ENCODE measurements at regions of chr7 and their contacts with region 1.

Region 1: GRCh38 chr7:94449148-94449725 is 54.5 kb downstream of the COL1A2 start:
- DNase-seq: no peak
- ATAC-seq: peak in 3 of 8 donors; percentile 52 to 59 (median 54)
- H3K4me3 ChIP-seq: no peak overlapping the region
- H3K27ac ChIP-seq: no peak overlapping the region
- H3K4me1 ChIP-seq: peaks cover 0 to 24% (median 8%) of the 10 kb centered on the region in 9 donors
- H3K27me3 ChIP-seq: peaks cover 0 to 6% (median 0%) of the 10 kb centered on the region in 7 donors
- CTCF ChIP-seq: peak; percentile 21 to 78 (median 63)

Region 2: GRCh38 chr7:93861325-93861949 is 587.8 kb before region 1 on chr7:
- intact Hi-C with region 1: no loop called
- DNase-seq: no peak
- ATAC-seq: no peak
- H3K4me3 ChIP-seq: no peak overlapping the region
- H3K27ac ChIP-seq: no peak overlapping the region
- H3K4me1 ChIP-seq: no peaks in the 10 kb centered on the region
- H3K27me3 ChIP-seq: no peaks in the 10 kb centered on the region
- CTCF ChIP-seq: peak in 4 of 9 donors; percentile 9 to 46 (median 18)

Region 3: GRCh38 chr7:94190599-94191061 is 258.6 kb before region 1 on chr7:
- intact Hi-C with region 1: no loop called
- DNase-seq: peak in 1 of 2 donors; percentile 9
- ATAC-seq: peak in 3 of 8 donors; percentile 41 to 66 (median 60)
- H3K4me3 ChIP-seq: no peak overlapping the region
- H3K27ac ChIP-seq: peak overlapping the region in 1 of 10 donors; percentile 2
- H3K4me1 ChIP-seq: peaks cover 0 to 10% (median 0%) of the 10 kb centered on the region in 9 donors
- H3K27me3 ChIP-seq: no peaks in the 10 kb centered on the region
- CTCF ChIP-seq: no peak

Region 4: GRCh38 chr7:94431619-94432280 is 17.5 kb before region 1 on chr7:
- intact Hi-C with region 1: no loop called
- DNase-seq: no peak
- ATAC-seq: no peak
- H3K4me3 ChIP-seq: no peak overlapping the region
- H3K27ac ChIP-seq: no peak overlapping the region
- H3K4me1 ChIP-seq: peaks cover 0 to 5% (median 0%) of the 10 kb centered on the region in 9 donors
- H3K27me3 ChIP-seq: peaks cover 0 to 9% (median 5%) of the 10 kb centered on the region in 7 donors
- CTCF ChIP-seq: no peak

Region 5: GRCh38 chr7:94509879-94510581 is 60.8 kb after region 1 on chr7:
- intact Hi-C with region 1: loop called in 3 of 10 experiments (anchors 5 to 10 kb)
- DNase-seq: peak; percentile 64
- ATAC-seq: peak; percentile 81 to 95 (median 88)
- H3K4me3 ChIP-seq: peak overlapping the region; percentile 73 to 96 (median 90)
- H3K27ac ChIP-seq: peak overlapping the region; percentile 92 to 98 (median 95)
- H3K4me1 ChIP-seq: peaks cover 0 to 43% (median 33%) of the 10 kb centered on the region in 9 donors
- H3K27me3 ChIP-seq: no peaks in the 10 kb centered on the region
- CTCF ChIP-seq: peak in 7 of 9 donors; percentile 6 to 60 (median 33)

Region 6: DNA sequence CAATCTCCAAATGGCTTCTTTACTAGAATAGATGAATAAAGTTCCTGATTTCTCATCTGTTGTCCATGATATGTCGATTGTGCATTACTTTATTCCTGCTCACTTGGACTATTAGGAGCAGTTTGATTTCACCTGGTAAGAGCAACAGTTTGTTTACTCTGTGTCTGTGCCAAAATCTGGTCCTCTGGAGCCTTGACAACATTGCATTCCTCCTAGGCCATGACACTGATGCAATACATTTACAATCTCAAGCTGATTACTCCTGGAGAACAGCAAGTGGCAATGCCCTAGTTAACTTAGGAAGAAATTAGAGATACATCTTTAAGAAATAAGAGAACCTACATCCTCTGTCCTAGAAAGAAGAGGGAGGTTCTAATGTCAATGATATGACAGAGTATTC is 134.9 kb after region 1 on chr7:
- intact Hi-C with region 1: no loop called
- DNase-seq: peak in 1 of 2 donors; percentile 14
- ATAC-seq: peak in 7 of 8 donors; percentile 28 to 85 (median 70)
- H3K4me3 ChIP-seq: no peak overlapping the region
- H3K27ac ChIP-seq: no peak overlapping the region
- H3K4me1 ChIP-seq: peaks cover 0 to 12% (median 0%) of the 10 kb centered on the region in 9 donors
- H3K27me3 ChIP-seq: no peaks in the 10 kb centered on the region
- CTCF ChIP-seq: no peak

Region 7: GRCh38 chr7:94657771-94658693 is 208.8 kb after region 1 on chr7:
- intact Hi-C with region 1: loop called in 9 of 10 experiments (anchors 2 to 10 kb)
- DNase-seq: peak; percentile 86 to 91
- ATAC-seq: peak; percentile 81 to 98 (median 92)
- H3K4me3 ChIP-seq: peak overlapping the region in 9 of 10 donors; percentile 60 to 89 (median 69)
- H3K27ac ChIP-seq: peak overlapping the region in 4 of 10 donors; percentile 4 to 56 (median 49)
- H3K4me1 ChIP-seq: peaks cover 0 to 30% (median 16%) of the 10 kb centered on the region in 9 donors
- H3K27me3 ChIP-seq: peaks cover 0 to 42% (median 18%) of the 10 kb centered on the region in 7 donors
- CTCF ChIP-seq: no peak

Region 8: DNA sequence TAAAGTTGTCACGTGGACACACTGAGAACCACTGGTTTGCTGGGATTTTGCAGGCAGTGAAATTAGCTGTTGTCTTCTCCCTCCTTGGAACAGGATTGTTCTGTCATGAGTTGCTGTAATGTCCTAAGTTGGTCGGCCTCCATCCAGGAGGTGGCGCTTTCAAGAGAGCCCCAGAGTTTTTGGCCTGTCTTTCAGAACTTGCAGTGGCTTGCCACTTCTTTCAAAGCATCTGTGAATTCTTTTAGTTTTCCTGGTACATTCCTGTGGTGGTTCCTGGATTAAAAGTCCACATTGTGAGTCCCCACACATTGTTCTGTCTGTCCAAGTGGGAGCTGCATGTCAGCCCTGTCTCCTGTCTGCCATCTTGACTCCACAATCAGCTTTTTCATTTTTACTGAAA is 741.3 kb after region 1 on chr7:
- intact Hi-C with region 1: loop called in 3 of 10 experiments (anchors 5 kb)
- DNase-seq: no peak
- ATAC-seq: no peak
- H3K4me3 ChIP-seq: no peak overlapping the region
- H3K27ac ChIP-seq: no peak overlapping the region
- H3K4me1 ChIP-seq: no peaks in the 10 kb centered on the region
- H3K27me3 ChIP-seq: no peaks in the 10 kb centered on the region
- CTCF ChIP-seq: peak in 1 of 9 donors; percentile 3

Region 9: DNA sequence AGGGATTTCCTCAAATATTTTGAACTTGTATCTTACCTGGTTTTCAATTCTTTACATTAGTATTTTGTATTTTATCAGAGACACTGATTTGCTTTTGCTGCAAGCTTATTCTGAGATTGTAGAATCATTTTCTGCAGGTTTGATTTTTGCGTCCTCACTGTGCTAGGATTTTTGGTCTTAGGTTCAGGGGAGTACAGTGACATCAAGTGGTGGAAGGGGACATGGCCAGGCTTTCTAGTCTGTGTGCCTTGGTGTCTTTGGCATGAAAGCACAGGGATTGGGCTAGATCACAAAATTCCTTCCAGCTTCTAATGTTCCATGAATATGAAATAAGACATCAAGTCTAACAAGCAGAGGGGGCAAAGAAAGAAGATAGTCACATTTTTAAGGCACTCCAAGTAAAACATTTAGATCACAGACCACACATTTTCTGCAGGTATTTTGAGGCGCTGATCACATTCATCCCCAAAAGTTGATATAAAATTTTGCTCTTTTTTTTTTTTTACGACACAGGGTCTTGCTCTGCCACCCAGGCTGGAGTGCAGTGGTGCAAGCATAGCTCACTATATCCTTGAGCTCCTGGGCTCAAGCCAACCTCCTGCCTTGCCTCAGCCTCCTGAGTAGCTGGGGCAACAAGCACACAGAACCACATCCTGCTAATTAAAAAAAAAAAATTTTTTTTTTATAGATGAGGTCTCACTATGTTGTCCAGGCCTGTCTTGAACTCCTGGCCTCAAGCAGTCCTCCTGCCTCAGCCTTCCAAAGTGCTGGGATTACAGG is 750.7 kb after region 1 on chr7:
- intact Hi-C with region 1: loop called in 2 of 10 experiments (anchors 5 kb)
- DNase-seq: peak in 1 of 2 donors; percentile 15
- ATAC-seq: peak in 6 of 8 donors; percentile 61 to 83 (median 78)
- H3K4me3 ChIP-seq: no peak overlapping the region
- H3K27ac ChIP-seq: no peak overlapping the region
- H3K4me1 ChIP-seq: peaks cover 0 to 4% (median 0%) of the 10 kb centered on the region in 9 donors
- H3K27me3 ChIP-seq: no peaks in the 10 kb centered on the region
- CTCF ChIP-seq: peak; percentile 30 to 81 (median 67)

Region 10: DNA sequence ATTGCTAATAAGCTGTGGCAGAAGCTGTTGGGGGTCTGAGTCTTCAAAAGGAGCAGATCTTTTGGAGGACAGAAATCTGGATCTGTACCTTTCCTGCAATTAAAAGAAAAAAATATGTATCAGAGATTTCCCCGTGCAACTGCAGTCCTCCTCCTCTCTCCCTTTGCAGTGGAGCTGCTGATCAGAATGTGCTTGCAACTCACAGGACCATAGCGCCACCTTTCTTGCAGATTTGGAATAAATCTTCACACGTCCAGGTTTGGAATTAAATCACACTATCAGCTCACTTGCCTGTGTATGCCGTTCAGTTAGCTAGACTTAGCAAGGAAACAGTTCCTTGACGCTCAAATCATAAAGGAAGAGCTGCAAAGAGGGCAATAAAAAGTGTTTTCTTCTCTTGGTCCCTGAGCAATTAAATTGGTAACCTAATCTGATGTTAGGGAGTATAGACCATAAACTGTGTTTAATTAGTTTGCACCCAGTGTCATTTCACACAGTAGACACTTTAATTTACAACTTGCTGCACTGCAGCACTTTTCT is 797.7 kb after region 1 on chr7:
- intact Hi-C with region 1: loop called in 4 of 10 experiments (anchors 5 kb)
- DNase-seq: peak in 1 of 2 donors; percentile 50
- ATAC-seq: peak; percentile 57 to 84 (median 71)
- H3K4me3 ChIP-seq: peak overlapping the region in 2 of 10 donors; percentile 16 to 27
- H3K27ac ChIP-seq: no peak overlapping the region
- H3K4me1 ChIP-seq: no peaks in the 10 kb centered on the region
- H3K27me3 ChIP-seq: no peaks in the 10 kb centered on the region
- CTCF ChIP-seq: peak; percentile 40 to 75 (median 68)

Measured in heart right ventricle (tissue), 16 donors.